AG04450 (cell line): ENCODE measurements at regions of chr12 and their contacts with region 1.

Region 1: GRCh38 chr12:111451649-111452129 is 46.0 kb downstream of the SH2B3 start:
- DNase-seq: no peak
- H3K4me3 ChIP-seq: no peak overlapping the region
- H3K27ac ChIP-seq: no peak overlapping the region
- H3K27me3 ChIP-seq: no peaks in the 10 kb centered on the region
- CTCF ChIP-seq: peak; percentile 78

Region 2: DNA sequence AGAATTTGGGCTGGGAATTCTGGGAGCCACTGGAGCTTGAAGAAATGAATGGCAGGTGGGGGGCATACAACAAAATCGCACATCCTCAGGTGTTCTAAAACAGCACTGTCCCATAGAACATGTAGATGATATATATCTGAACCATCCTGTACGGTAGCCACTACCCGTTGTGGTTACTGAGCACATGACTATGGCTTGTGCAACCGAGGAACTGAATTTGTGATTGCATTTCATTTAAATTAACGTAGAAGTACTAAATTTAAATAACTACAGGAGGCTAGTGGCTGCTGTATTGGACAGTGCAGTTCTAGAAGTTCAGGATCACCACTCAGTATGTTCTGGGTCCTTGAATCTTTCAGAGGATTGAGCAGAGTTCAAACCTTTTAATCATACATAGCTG is 255.2 kb before region 1 on chr12:
- CTCF ChIA-PET with region 1: no interaction called
- POLR2A ChIA-PET with region 1: no interaction called
- DNase-seq: no peak
- H3K4me3 ChIP-seq: no peak overlapping the region
- H3K27ac ChIP-seq: no peak overlapping the region
- H3K27me3 ChIP-seq: peaks cover 6% of the 10 kb centered on the region
- CTCF ChIP-seq: no peak

Region 3: DNA sequence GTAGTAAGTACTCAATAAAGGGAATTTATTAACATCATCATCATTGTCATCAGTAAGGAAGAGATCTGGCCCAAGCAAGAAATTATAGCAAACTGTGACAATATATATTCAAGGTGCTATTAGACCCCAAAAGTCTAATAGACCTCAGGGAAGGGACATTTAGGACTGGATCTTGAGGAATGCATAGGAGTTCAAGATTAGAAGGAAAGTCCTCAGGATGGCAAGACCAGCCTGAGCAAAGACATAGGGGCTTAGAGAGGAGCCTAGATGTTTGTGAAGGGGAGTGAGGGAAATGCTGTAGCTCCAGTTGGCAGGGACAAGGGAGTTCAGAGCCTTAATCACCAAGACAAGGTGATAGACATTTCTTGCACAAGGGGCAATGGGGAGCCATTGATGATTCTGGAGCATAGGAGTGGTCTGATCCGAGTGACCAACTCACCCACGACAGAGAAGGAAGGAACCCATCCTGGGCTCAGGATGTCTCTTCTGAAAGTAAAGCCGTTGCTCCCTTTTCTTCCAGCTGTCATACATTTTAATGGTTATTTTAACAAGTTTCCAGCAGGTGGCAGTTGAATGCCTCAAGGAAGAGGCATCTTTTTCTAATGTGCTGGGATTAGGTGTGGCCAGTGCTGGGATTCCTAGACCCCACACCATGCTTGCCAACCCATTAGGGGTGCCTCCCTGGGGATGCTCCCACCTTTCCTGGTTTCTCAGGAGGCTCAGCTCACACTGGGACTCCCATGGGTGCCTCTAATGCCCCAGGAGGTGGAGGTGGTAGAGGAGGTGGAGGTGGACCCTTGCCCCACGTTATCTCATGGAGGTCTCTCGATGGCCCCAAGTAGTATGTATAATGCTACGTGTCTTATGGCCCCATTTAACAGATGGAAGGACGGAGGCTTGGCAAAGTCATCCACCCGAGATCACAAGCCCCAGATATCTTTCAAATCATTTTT is 120.6 kb before region 1 on chr12:
- CTCF ChIA-PET with region 1: interaction called, 15 read pairs
- POLR2A ChIA-PET with region 1: no interaction called
- DNase-seq: peak; percentile 3
- H3K4me3 ChIP-seq: no peak overlapping the region
- H3K27ac ChIP-seq: no peak overlapping the region
- H3K27me3 ChIP-seq: peaks cover 8% of the 10 kb centered on the region
- CTCF ChIP-seq: peak; percentile 45

Region 4: GRCh38 chr12:111412007-111412829 is 39.5 kb before region 1 on chr12:
- CTCF ChIA-PET with region 1: interaction called, 22 read pairs
- POLR2A ChIA-PET with region 1: no interaction called
- DNase-seq: no peak
- H3K4me3 ChIP-seq: no peak overlapping the region
- H3K27ac ChIP-seq: peak overlapping the region; percentile 21
- H3K27me3 ChIP-seq: no peaks in the 10 kb centered on the region
- CTCF ChIP-seq: no peak

Region 5: DNA sequence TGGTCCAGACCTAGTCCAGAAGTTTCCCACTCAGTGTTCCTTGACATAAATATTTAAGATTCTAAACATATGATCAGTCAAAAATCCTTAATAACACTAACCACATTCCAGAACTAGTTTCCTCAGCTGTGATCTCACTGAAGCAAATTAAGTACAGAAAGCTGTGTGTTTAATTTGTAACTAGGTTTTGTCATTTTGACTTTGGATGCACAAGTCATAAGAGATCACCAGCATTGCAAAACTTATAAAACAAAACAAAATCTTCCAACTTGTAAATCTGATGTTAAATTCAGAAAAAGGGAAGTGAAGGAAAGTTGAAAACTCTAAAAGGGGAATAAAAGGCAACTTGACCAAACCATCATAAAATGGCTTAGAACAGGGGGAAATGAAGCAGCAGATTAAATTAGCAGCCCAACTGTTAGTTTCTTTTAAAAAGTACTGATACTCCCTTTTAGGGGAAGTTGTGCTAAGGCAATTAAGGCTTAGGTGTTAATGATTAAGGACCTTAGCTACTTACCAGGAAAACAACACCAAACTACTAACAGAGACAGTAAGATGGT is 10.6 kb after region 1 on chr12:
- CTCF ChIA-PET with region 1: interaction called, 53 read pairs
- POLR2A ChIA-PET with region 1: interaction called, 4 read pairs
- DNase-seq: peak; percentile 72
- H3K4me3 ChIP-seq: no peak overlapping the region
- H3K27ac ChIP-seq: peak overlapping the region; percentile 59
- H3K27me3 ChIP-seq: no peaks in the 10 kb centered on the region
- CTCF ChIP-seq: no peak

Region 6: GRCh38 chr12:111482462-111482861 is 30.8 kb after region 1 on chr12:
- CTCF ChIA-PET with region 1: interaction called, 11 read pairs
- POLR2A ChIA-PET with region 1: interaction called, 3 read pairs
- DNase-seq: no peak
- H3K4me3 ChIP-seq: no peak overlapping the region
- H3K27ac ChIP-seq: no peak overlapping the region
- H3K27me3 ChIP-seq: no peaks in the 10 kb centered on the region
- CTCF ChIP-seq: peak; percentile 34

Region 7: DNA sequence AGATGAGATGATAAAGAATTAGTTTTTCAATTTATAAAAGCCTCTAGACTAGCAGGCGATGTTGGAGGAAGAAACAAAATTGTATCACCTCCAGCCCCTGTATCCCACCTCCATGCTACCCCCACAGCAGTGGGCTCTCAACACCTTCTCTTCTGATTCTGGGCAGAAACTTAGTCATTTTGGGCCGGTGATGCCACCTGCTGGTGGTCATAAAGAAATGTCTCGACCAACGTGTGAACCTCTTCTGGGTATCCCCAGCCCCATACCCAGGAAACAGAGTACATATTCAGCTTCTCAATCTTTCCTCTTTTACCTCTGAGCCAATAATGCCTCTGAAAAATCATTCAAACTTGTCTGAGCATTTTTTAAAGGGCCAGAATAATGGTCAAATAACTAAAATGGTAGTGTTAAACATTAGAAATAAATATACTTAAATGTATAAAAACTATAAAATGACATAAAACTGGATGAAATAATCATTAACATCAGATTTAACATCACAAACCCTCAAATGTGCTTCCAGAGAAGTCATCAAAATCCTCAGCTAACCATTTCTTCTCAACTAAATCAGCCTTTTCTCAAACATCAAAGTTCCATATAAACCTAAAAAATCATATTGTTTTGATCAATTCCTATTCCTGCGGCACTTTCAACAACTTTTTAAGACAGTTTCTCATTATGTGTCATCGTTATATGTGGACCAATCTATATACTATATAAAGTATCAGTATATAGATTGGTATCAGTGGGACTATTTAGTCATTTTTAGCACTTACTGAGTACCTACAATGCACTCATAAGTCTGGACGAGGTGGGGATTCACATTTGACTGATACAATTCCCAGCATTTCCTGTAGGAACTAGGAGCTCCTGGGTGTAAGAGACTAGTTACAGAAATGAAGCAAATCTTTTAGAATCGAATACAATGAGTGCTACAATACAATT is 78.0 kb after region 1 on chr12:
- CTCF ChIA-PET with region 1: interaction called, 16 read pairs
- POLR2A ChIA-PET with region 1: no interaction called
- DNase-seq: peak; percentile 18
- H3K4me3 ChIP-seq: no peak overlapping the region
- H3K27ac ChIP-seq: no peak overlapping the region
- H3K27me3 ChIP-seq: no peaks in the 10 kb centered on the region
- CTCF ChIP-seq: peak; percentile 77

Region 8: GRCh38 chr12:112214064-112214463 is 762.4 kb after region 1 on chr12:
- CTCF ChIA-PET with region 1: no interaction called
- POLR2A ChIA-PET with region 1: no interaction called
- DNase-seq: no peak
- H3K4me3 ChIP-seq: no peak overlapping the region
- H3K27ac ChIP-seq: no peak overlapping the region
- H3K27me3 ChIP-seq: no peaks in the 10 kb centered on the region
- CTCF ChIP-seq: no peak